Endothelial cell of umbilical vein (primary cell): ENCODE measurements at regions of chr11 and their contacts with region 1.

Region 1: GRCh38 chr11:103682318-103683184 is 353.9 kb upstream of the DDI1 start:
- DNase-seq: peak; percentile 86
- H3K4me3 ChIP-seq: no peak overlapping the region
- H3K27ac ChIP-seq: no peak overlapping the region
- H3K4me1 ChIP-seq: peaks cover 19% of the 10 kb centered on the region
- H3K27me3 ChIP-seq: no peaks in the 10 kb centered on the region
- CTCF ChIP-seq: peak; percentile 67 to 81
- POLR2A ChIP-seq: no peak

Region 2: DNA sequence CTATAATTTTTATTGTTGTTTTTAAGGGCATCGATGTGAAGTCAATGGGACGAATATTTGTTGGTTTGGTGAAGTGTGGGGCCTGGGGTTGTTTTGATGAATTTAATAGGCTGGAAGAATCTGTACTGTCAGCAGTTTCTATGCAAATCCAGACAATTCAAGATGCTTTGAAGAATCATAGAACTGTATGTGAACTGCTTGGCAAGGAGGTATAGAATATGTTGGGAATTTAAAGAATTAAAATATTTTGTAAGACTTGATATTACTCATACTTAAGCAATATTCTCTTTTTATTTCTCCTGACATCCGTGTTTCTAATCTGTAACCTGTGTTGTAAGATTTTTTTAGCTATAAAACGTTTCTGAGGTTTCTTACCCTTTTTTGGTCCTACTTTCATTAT is 511.7 kb before region 1 on chr11:
- CTCF ChIA-PET with region 1: no interaction called
- POLR2A ChIA-PET with region 1: no interaction called
- dilution Hi-C with region 1: no loop called
- intact Hi-C with region 1: no loop called
- DNase-seq: no peak
- H3K4me3 ChIP-seq: no peak overlapping the region
- H3K27ac ChIP-seq: no peak overlapping the region
- H3K4me1 ChIP-seq: no peaks in the 10 kb centered on the region
- H3K27me3 ChIP-seq: no peaks in the 10 kb centered on the region
- CTCF ChIP-seq: no peak
- POLR2A ChIP-seq: no peak

Region 3: GRCh38 chr11:103257360-103257759 is 425.2 kb before region 1 on chr11:
- CTCF ChIA-PET with region 1: interaction called, 13 read pairs
- POLR2A ChIA-PET with region 1: no interaction called
- dilution Hi-C with region 1: no loop called
- intact Hi-C with region 1: loop called (anchors 1 kb)
- DNase-seq: peak; percentile 60
- H3K4me3 ChIP-seq: no peak overlapping the region
- H3K27ac ChIP-seq: no peak overlapping the region
- H3K4me1 ChIP-seq: no peaks in the 10 kb centered on the region
- H3K27me3 ChIP-seq: no peaks in the 10 kb centered on the region
- CTCF ChIP-seq: peak in 1 of 2 donors; percentile 32
- POLR2A ChIP-seq: no peak

Region 4: DNA sequence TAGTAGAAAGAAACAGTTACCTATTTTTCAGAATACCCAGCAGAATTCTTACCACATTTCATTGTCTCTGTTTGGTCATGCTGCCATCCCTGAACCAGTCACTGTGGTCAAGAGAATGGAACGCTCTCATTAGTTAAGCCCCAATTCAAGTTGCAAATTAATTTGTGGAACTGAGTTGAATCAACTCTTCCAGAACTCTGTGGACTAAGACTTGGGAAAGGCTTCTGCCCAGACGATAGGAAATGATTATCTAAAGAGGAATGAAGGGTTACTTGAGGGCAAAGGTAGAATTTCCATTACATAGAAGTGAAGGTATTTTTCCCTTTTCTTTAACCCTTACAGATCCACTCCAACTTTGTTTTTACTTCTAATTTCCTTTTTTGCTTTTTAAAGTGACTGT is 286.9 kb before region 1 on chr11:
- CTCF ChIA-PET with region 1: no interaction called
- POLR2A ChIA-PET with region 1: no interaction called
- dilution Hi-C with region 1: no loop called
- intact Hi-C with region 1: no loop called
- DNase-seq: peak; percentile 41
- H3K4me3 ChIP-seq: no peak overlapping the region
- H3K27ac ChIP-seq: peak overlapping the region; percentile 32
- H3K4me1 ChIP-seq: peaks cover 8% of the 10 kb centered on the region
- H3K27me3 ChIP-seq: no peaks in the 10 kb centered on the region
- CTCF ChIP-seq: no peak
- POLR2A ChIP-seq: no peak

Region 5: GRCh38 chr11:103696123-103696522 is 13.6 kb after region 1 on chr11:
- CTCF ChIA-PET with region 1: interaction called, 41 read pairs
- POLR2A ChIA-PET with region 1: no interaction called
- dilution Hi-C with region 1: no loop called
- intact Hi-C with region 1: no loop called
- DNase-seq: no peak
- H3K4me3 ChIP-seq: no peak overlapping the region
- H3K27ac ChIP-seq: no peak overlapping the region
- H3K4me1 ChIP-seq: no peaks in the 10 kb centered on the region
- H3K27me3 ChIP-seq: no peaks in the 10 kb centered on the region
- CTCF ChIP-seq: no peak
- POLR2A ChIP-seq: no peak

Region 6: DNA sequence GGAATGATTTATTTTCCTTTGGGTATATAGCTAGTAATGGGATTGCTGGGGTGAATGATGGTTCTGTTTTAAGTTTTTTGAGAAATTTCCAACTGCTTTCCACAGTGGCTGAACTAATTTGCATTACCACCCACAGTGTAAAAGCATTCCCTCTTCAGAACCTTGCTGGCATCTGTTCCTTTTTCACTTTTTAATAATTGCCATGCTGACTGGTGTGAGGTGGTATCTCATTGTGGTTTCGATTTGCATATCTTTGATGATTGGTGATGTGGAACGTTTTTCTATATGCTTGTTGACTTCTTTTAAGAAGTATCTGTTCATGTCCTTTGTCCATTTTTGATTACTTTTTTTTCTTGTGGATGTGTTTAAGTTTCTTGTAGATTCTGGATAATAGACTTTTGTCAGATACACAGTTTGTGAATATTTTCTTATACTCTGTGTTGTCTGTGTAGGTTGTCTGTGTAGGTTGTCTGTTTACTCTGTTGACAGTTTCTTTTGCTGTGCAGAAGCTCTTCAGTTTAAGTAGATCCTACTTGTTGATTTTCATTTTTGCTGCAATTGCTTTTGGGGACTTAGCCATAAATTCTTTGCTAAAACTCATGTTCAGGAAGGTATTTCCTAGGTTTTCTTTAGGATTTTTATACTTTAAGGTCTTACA is 62.1 kb after region 1 on chr11:
- CTCF ChIA-PET with region 1: no interaction called
- POLR2A ChIA-PET with region 1: no interaction called
- dilution Hi-C with region 1: no loop called
- intact Hi-C with region 1: no loop called
- DNase-seq: no peak
- H3K4me3 ChIP-seq: no peak overlapping the region
- H3K27ac ChIP-seq: no peak overlapping the region
- H3K4me1 ChIP-seq: no peaks in the 10 kb centered on the region
- H3K27me3 ChIP-seq: no peaks in the 10 kb centered on the region
- CTCF ChIP-seq: no peak
- POLR2A ChIP-seq: no peak

Region 7: DNA sequence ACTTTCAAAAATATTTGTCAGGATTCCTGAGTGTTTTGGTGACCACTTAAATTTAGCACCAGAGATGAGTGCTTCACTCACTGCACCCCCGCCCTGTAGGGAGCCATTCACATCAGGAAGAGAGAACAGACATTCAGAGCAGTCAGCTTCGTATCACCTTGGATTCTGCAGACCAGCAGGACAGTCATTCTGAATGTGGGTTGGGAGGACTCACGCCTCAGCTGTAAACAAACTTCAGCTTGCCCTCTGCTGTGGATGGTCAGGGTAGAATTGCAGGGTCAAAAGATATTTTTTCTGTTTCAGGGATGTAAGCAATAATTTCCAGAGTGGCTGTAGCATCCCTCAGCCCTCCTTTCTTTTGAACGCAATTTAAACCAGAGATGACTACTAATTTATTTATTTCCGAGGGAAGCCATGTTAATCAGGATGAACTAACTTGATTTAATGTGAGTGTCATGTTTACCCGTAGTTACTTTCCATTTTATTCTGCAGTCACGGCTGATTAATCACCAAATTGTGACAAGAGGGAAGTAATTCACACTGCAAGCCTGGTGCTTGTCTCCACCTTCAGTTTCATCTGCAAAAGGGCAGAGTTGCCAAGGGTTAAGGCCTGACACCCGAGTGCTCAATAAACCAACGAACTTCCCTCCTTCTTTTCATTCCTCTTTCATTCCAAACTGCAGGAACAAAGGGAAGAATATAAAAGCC is 179.7 kb after region 1 on chr11:
- CTCF ChIA-PET with region 1: no interaction called
- POLR2A ChIA-PET with region 1: no interaction called
- dilution Hi-C with region 1: no loop called
- intact Hi-C with region 1: no loop called
- DNase-seq: no peak
- H3K4me3 ChIP-seq: no peak overlapping the region
- H3K27ac ChIP-seq: no peak overlapping the region
- H3K4me1 ChIP-seq: no peaks in the 10 kb centered on the region
- H3K27me3 ChIP-seq: no peaks in the 10 kb centered on the region
- CTCF ChIP-seq: no peak
- POLR2A ChIP-seq: no peak

Region 8: GRCh38 chr11:103903621-103904323 is 221.2 kb after region 1 on chr11:
- CTCF ChIA-PET with region 1: interaction called, 23 read pairs
- POLR2A ChIA-PET with region 1: no interaction called
- dilution Hi-C with region 1: no loop called
- intact Hi-C with region 1: loop called (anchors 2 kb)
- DNase-seq: no peak
- H3K4me3 ChIP-seq: no peak overlapping the region
- H3K27ac ChIP-seq: no peak overlapping the region
- H3K4me1 ChIP-seq: peaks cover 36% of the 10 kb centered on the region
- H3K27me3 ChIP-seq: no peaks in the 10 kb centered on the region
- CTCF ChIP-seq: no peak
- POLR2A ChIP-seq: no peak

Region 9: GRCh38 chr11:104151404-104152204 is 469.1 kb after region 1 on chr11:
- CTCF ChIA-PET with region 1: interaction called, 25 read pairs
- POLR2A ChIA-PET with region 1: no interaction called
- dilution Hi-C with region 1: no loop called
- intact Hi-C with region 1: loop called (anchors 1 kb)
- DNase-seq: peak; percentile 41
- H3K4me3 ChIP-seq: no peak overlapping the region
- H3K27ac ChIP-seq: no peak overlapping the region
- H3K4me1 ChIP-seq: peaks cover 6% of the 10 kb centered on the region
- H3K27me3 ChIP-seq: no peaks in the 10 kb centered on the region
- CTCF ChIP-seq: peak in 1 of 2 donors; percentile 19
- POLR2A ChIP-seq: no peak

Region 10: DNA sequence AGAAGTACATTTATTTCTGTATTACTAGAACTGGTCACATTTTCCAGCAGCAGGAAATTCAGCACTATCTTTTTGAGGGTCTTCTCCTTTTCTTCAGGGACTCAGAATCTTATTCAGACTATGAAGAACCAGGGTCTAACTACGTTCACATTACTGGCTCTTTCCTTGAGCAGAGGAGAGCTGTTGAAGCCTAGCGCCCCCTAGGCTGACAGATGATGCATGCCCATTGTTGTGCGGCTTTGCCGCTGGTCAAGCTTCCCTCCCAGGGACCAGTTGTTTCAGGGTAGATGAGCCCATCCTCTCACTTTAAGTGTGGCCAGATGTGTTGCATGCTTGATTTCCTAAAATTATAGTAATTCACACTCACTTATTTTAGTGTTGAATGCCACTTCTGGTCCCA is 649.6 kb after region 1 on chr11:
- CTCF ChIA-PET with region 1: interaction called, 21 read pairs
- POLR2A ChIA-PET with region 1: no interaction called
- dilution Hi-C with region 1: no loop called
- intact Hi-C with region 1: loop called (anchors 1 kb)
- DNase-seq: peak; percentile 9
- H3K4me3 ChIP-seq: no peak overlapping the region
- H3K27ac ChIP-seq: no peak overlapping the region
- H3K4me1 ChIP-seq: no peaks in the 10 kb centered on the region
- H3K27me3 ChIP-seq: no peaks in the 10 kb centered on the region
- CTCF ChIP-seq: peak; percentile 27 to 60
- POLR2A ChIP-seq: no peak